H1 (cell line): ENCODE measurements at regions of chr6 and their contacts with region 1.

Region 1: GRCh38 chr6:162907876-162908481 is 180.2 kb downstream of the PACRG start:
- DNase-seq: no peak
- H3K4me3 ChIP-seq: no peak overlapping the region
- H3K27ac ChIP-seq: no peak overlapping the region
- H3K4me1 ChIP-seq: no peaks in the 10 kb centered on the region
- H3K27me3 ChIP-seq: no peaks in the 10 kb centered on the region
- CTCF ChIP-seq: peak in 2 of 3 experiments; percentile 14 to 39; a peak in 2 of 4 replicates
- EP300 ChIP-seq: no peak
- POLR2A ChIP-seq: no peak
- RAD21 ChIP-seq: peak; percentile 44

Region 2: GRCh38 chr6:162889303-162889702 is 18.7 kb before region 1 on chr6:
- CTCF ChIA-PET with region 1: interaction called, 17 read pairs
- POLR2A ChIA-PET with region 1: no interaction called
- DNase-seq: no peak
- H3K4me3 ChIP-seq: no peak overlapping the region
- H3K27ac ChIP-seq: no peak overlapping the region
- H3K4me1 ChIP-seq: no peaks in the 10 kb centered on the region
- H3K27me3 ChIP-seq: no peaks in the 10 kb centered on the region
- CTCF ChIP-seq: no peak
- EP300 ChIP-seq: no peak
- POLR2A ChIP-seq: no peak
- RAD21 ChIP-seq: no peak